ENCODE measurements at regions of chr3 and their contacts with region 1.

Region 1: DNA sequence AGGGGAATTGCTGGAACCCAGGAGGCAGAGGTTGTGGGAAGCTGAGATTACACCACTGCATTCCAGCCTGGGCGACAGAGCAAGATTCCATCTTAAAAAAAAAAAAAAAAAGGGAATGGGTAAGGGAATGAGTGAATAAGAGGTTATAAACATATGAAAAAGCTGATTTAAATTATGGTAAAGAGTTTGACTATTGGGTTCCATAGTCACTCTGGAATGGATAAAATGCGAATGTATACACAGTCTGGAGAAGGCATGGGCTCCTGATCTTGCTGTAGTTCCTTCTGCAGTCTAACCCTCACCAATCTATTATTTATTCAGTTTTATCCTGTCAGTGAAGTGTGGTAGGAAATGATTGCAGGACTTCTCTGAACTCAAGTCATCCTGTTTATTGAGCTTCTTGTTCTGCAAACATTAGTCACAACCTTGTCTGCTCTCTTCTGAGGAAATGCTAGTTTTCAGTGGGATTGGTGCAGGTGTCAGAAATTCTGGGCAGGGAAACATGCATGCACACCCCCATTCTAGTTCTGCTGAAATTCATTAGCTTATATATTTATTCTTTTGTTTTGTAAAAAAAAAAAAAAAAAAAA is 190.9 kb upstream of the CFAP20DC start:
- DNase-seq: no peak
- H3K4me3 ChIP-seq: no peak overlapping the region
- H3K27ac ChIP-seq: no peak overlapping the region
- H3K4me1 ChIP-seq: no peaks in the 10 kb centered on the region
- H3K27me3 ChIP-seq: no peaks in the 10 kb centered on the region
- CTCF ChIP-seq: no peak

Region 2: GRCh38 chr3:59212128-59212779 is 28.5 kb before region 1 on chr3:
- CTCF ChIA-PET with region 1: no interaction called
- POLR2A ChIA-PET with region 1: interaction called, 13 read pairs
- intact Hi-C with region 1: no loop called
- DNase-seq: peak; percentile 22
- H3K4me3 ChIP-seq: no peak overlapping the region
- H3K27ac ChIP-seq: no peak overlapping the region
- H3K4me1 ChIP-seq: no peaks in the 10 kb centered on the region
- H3K27me3 ChIP-seq: no peaks in the 10 kb centered on the region
- CTCF ChIP-seq: peak; percentile 55

Region 3: GRCh38 chr3:59308684-59309083 is 67.9 kb after region 1 on chr3:
- CTCF ChIA-PET with region 1: no interaction called
- POLR2A ChIA-PET with region 1: no interaction called
- intact Hi-C with region 1: no loop called
- DNase-seq: no peak
- H3K4me3 ChIP-seq: no peak overlapping the region
- H3K27ac ChIP-seq: no peak overlapping the region
- H3K4me1 ChIP-seq: no peaks in the 10 kb centered on the region
- H3K27me3 ChIP-seq: no peaks in the 10 kb centered on the region
- CTCF ChIP-seq: peak; percentile 32; the same call in 1 of the 2 replicates